Mammary epithelial cell (primary cell): ENCODE measurements at regions of chr1 and their contacts with region 1.

Region 1: DNA sequence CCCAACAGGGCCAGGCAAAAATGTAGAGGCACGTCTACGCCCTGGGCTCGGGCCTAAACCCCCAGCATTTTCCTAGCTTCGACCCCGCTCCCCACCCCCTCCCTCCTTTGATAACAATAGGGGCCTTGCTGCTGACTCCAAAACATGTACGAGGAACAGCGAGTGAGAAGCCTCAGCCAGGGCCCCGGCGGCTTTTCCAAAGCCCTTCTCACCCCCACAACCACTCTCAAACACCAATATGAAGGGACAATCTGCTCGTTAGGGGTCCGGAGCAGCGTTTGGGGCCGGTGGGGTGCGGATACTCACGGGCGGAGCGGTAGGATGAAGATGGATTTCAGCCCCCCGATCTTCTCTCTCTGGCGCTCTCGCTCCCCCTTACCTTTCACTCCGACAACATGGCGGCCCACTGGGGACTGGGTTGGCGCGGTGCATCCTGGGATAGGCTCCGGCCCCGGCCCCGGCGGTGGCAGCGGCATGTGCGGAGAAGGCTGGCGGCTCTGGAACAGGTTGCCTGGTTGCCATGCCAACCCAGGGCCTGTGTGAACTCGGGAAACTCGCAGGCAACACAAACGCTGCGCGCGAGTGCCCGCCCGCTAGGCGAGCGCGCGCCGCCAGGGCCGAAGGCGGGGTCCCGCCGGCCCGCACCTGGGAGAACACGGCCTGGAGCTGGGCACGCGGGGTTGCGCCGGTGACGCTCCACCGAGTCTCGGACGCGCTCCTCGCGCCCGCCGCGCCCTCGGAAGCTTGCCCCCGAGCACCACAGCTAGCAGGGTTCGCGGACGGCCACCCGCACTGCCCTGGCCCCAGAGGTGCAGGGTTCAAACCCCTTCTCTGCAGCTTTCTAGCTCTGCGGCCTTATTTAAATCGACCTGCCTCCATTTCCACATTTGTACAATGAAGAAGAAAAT is at the start of gene PUM1:
- DNase-seq: peak; percentile 99
- H3K4me3 ChIP-seq: peak within 1 kb of the TSS; percentile 70 to 72 (median 71)
- H3K27ac ChIP-seq: peak within 1 kb of the TSS; percentile 97
- H3K4me1 ChIP-seq: peaks cover 18% of the 10 kb centered on the region
- H3K27me3 ChIP-seq: no peaks in the 10 kb centered on the region
- CTCF ChIP-seq: no peak
- total RNA-seq, gene PUM1: 91.2 to 107 TPM

Region 2: GRCh38 chr1:31010086-31010989 is 55.2 kb before region 1 on chr1:
- CTCF ChIA-PET with region 1: no interaction called
- dilution Hi-C with region 1: loop called (anchors 5 kb)
- in situ Hi-C with region 1: no loop called
- intact Hi-C with region 1: loop called (anchors 5 kb)
- DNase-seq: peak; percentile 70
- H3K4me3 ChIP-seq: no peak overlapping the region
- H3K27ac ChIP-seq: peak overlapping the region; percentile 16
- H3K4me1 ChIP-seq: peaks cover 82% of the 10 kb centered on the region
- H3K27me3 ChIP-seq: no peaks in the 10 kb centered on the region
- CTCF ChIP-seq: no peak

Region 3: GRCh38 chr1:31029026-31029425 is 36.5 kb before region 1 on chr1:
- CTCF ChIA-PET with region 1: interaction called, 10 read pairs
- dilution Hi-C with region 1: no loop called
- in situ Hi-C with region 1: no loop called
- intact Hi-C with region 1: no loop called
- DNase-seq: no peak
- H3K4me3 ChIP-seq: no peak overlapping the region
- H3K27ac ChIP-seq: peak overlapping the region; percentile 29
- H3K4me1 ChIP-seq: peaks cover 37% of the 10 kb centered on the region
- H3K27me3 ChIP-seq: no peaks in the 10 kb centered on the region
- CTCF ChIP-seq: no peak

Region 4: DNA sequence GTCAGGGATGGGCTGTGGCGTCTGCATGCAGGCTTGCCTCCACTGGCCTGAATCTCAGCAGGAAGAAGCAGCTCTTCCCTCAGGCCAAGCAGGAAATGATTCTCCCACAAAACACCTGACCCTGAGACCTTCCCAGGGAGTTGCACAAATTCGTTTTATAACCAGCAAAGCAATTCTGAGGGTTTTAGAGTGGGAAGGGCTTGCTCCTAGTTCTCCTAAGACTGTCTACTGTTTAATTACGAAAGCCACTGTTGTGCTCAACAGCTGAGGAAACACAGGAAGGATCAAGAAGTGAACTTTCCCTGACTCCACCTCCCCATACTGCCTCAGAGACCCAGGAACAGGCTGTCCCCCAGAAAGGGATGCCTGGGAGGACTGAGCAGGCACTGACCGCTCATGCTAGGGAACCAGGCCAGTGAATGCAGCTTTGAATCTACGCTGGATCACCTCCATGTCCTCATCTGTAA is 37.0 kb after region 1 on chr1:
- CTCF ChIA-PET with region 1: no interaction called
- dilution Hi-C with region 1: no loop called
- in situ Hi-C with region 1: no loop called
- intact Hi-C with region 1: loop called (anchors 5 kb)
- DNase-seq: peak; percentile 90
- H3K4me3 ChIP-seq: no peak overlapping the region
- H3K27ac ChIP-seq: peak overlapping the region; percentile 80
- H3K4me1 ChIP-seq: peaks cover 25% of the 10 kb centered on the region
- H3K27me3 ChIP-seq: no peaks in the 10 kb centered on the region
- CTCF ChIP-seq: no peak

Region 5: DNA sequence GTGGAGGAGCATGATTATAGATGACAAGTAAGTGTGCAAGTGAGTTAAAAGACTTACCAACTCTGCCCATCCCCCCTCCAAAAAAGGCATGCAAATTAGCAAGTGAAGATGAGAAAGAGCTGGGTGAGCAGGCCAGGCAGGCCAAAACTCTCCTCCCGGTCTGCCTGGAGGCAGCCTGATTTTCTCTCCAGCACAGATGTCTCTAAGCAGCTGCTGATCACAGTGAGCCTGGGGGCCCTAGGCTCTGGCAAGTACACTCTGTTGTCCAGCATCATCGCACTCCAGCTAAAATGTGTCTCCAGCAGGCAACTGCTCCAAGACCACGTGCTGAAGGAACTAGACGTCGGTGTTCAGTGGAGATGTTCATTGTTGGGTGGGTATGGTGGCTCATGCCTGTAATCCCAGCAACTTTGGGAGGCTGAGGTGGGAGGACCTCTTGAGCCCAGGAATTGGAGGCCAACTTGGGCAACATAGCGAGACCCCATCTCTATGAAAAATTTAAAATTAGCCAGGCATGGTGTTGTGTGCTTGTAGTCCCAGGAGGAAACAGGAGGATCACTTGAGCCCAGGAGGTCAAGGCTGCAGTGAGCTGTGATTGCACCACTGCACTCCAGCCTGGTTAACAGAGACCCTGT is 56.7 kb after region 1 on chr1:
- CTCF ChIA-PET with region 1: no interaction called
- dilution Hi-C with region 1: loop called (anchors 5 kb)
- in situ Hi-C with region 1: no loop called
- intact Hi-C with region 1: no loop called
- DNase-seq: no peak
- H3K4me3 ChIP-seq: no peak overlapping the region
- H3K27ac ChIP-seq: no peak overlapping the region
- H3K4me1 ChIP-seq: peaks cover 12% of the 10 kb centered on the region
- H3K27me3 ChIP-seq: no peaks in the 10 kb centered on the region
- CTCF ChIP-seq: no peak

Region 6: GRCh38 chr1:31144442-31144841 is 78.9 kb after region 1 on chr1:
- CTCF ChIA-PET with region 1: no interaction called
- dilution Hi-C with region 1: no loop called
- in situ Hi-C with region 1: no loop called
- intact Hi-C with region 1: no loop called
- DNase-seq: no peak
- H3K4me3 ChIP-seq: no peak overlapping the region
- H3K27ac ChIP-seq: no peak overlapping the region
- H3K4me1 ChIP-seq: no peaks in the 10 kb centered on the region
- H3K27me3 ChIP-seq: no peaks in the 10 kb centered on the region
- CTCF ChIP-seq: no peak

Region 7: DNA sequence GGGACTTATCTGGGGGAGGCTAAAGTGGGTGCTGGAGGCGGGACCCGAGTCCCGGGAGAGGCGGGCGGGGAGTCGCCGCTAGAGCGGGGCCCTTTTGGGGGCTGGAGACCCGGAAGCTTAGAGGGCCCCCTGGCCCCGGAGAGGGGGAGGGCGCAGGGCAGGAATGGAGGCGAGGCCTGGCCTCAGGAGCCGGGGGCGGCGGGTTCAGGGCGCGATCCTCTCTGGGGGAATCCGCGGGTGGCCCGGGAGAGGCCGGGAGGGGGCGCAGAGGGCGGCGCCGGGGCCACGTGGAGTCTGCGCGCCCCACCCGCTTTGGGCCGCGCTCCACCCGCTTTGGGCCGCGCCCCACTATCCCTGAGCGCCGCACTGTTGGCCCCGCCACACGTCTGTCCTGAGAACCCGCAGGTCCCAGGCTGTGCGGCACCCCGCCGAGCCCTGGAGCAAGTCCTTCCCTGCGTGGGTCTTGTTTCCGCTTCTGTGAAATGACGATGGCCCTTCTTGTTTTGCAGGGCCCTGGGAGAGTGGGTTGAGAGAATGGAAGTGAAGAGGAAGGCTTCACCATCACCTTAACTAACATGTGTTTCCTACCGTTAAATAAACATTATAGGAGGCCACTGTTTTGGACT is 89.8 kb after region 1 on chr1:
- CTCF ChIA-PET with region 1: no interaction called
- dilution Hi-C with region 1: loop called (anchors 5 kb)
- in situ Hi-C with region 1: no loop called
- intact Hi-C with region 1: loop called (anchors 1 kb)
- DNase-seq: peak; percentile 77
- H3K4me3 ChIP-seq: peak overlapping the region; percentile 39 to 78 (median 54)
- H3K27ac ChIP-seq: peak overlapping the region; percentile 75
- H3K4me1 ChIP-seq: peaks cover 30% of the 10 kb centered on the region
- H3K27me3 ChIP-seq: no peaks in the 10 kb centered on the region
- CTCF ChIP-seq: peak in 1 of 2 donors; percentile 48